Naive thymus-derived CD4-positive, alpha-beta T cell (primary cell): ENCODE measurements at regions of chr21 and their contacts with region 1.

Region 1: GRCh38 chr21:44939532-44940115 is at the start of gene SLX9:
- DNase-seq: peak; percentile 70 to 88 (median 79)
- ATAC-seq: peak; percentile 94
- H3K4me3 ChIP-seq: peak within 1 kb of the TSS; percentile 83
- H3K4me3 Mint-ChIP-seq: peak within 1 kb of the TSS; percentile 87 to 95 (median 91)
- H3K27ac ChIP-seq: peak within 1 kb of the TSS; percentile 80
- H3K27ac Mint-ChIP-seq: peak within 1 kb of the TSS; percentile 82 to 96 (median 87)
- H3K4me1 ChIP-seq: peaks cover 22 to 34% of the 10 kb centered on the region in 2 donors
- H3K4me1 Mint-ChIP-seq: peaks cover 30 to 55% (median 45%) of the 10 kb centered on the region in 7 donors
- H3K27me3 ChIP-seq: no peaks in the 10 kb centered on the region
- H3K27me3 Mint-ChIP-seq: no peaks in the 10 kb centered on the region
- total RNA-seq, gene SLX9: 17.8 to 46.4 (median 20.6) TPM

Region 2: GRCh38 chr21:44758781-44759627 is 180.6 kb before region 1 on chr21:
- CTCF ChIA-PET with region 1: no interaction called
- POLR2A ChIA-PET with region 1: no interaction called
- intact Hi-C with region 1: no loop called
- DNase-seq: peak in 1 of 9 donors; percentile 17
- ATAC-seq: no peak
- H3K4me3 ChIP-seq: no peak overlapping the region
- H3K4me3 Mint-ChIP-seq: no peak overlapping the region
- H3K27ac ChIP-seq: no peak overlapping the region
- H3K27ac Mint-ChIP-seq: no peak overlapping the region
- H3K4me1 ChIP-seq: no peaks in the 10 kb centered on the region
- H3K4me1 Mint-ChIP-seq: peaks cover 0 to 6% (median 5%) of the 10 kb centered on the region in 7 donors
- H3K27me3 ChIP-seq: no peaks in the 10 kb centered on the region
- H3K27me3 Mint-ChIP-seq: no peaks in the 10 kb centered on the region

Region 3: GRCh38 chr21:45287438-45288391 is 348.1 kb after region 1 on chr21 and contains the start of gene POFUT2:
- CTCF ChIA-PET with region 1: no interaction called
- POLR2A ChIA-PET with region 1: no interaction called
- intact Hi-C with region 1: loop called in 1 of 2 experiments (anchors 10 kb)
- DNase-seq: peak; percentile 95 to 100 (median 98)
- ATAC-seq: peak; percentile 91
- H3K4me3 ChIP-seq: peak within 1 kb of the TSS; percentile 68
- H3K4me3 Mint-ChIP-seq: peak within 1 kb of the TSS; percentile 68 to 88 (median 87)
- H3K27ac ChIP-seq: peak within 1 kb of the TSS; percentile 97
- H3K27ac Mint-ChIP-seq: peak within 1 kb of the TSS; percentile 72 to 93 (median 87)
- H3K4me1 ChIP-seq: peaks cover 7 to 16% of the 10 kb centered on the region in 2 donors
- H3K4me1 Mint-ChIP-seq: peaks cover 11 to 46% (median 30%) of the 10 kb centered on the region in 7 donors
- H3K27me3 ChIP-seq: no peaks in the 10 kb centered on the region
- H3K27me3 Mint-ChIP-seq: peaks cover 0 to 10% (median 0%) of the 10 kb centered on the region in 5 donors
- total RNA-seq, gene POFUT2: 20.1 to 53.3 (median 47.8) TPM